ENCODE measurements at regions of chr15 and their contacts with region 1.

Region 1: DNA sequence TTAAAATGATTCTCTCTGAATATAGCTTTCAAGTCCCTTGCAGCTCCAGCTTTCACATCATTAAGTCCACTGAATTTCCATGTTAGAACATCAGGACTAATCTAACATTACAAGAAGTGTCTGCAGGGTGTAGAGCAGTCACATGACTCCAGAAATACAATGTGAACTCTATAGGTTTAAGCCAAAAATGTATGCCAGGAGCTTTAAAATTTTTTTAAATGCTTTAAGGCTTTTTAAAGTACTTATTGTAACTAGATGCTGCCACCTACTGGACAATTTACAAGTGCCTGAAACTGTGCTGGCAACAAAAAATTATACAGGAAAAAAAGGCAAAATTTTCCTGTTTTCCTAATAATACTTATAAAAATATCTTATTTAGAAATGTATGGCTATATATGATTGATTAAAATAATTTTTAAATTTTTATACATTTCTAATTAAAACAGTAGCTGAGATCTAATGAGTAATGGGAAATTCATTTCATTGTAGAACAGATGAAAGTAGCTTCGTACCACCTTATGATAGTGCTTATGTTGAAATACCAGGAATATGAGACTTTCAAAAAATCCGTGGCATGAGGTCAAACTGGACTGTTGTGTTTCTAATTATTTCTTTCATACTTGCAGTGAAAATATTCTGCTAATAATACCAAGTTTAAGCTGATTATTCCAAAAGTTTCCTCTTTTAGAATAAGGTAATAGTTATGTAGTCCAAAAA is 25.7 kb downstream of the FSIP1 start:
- DNase-seq: peak; percentile 24
- H3K4me3 Mint-ChIP-seq: no peak overlapping the region
- H3K27ac Mint-ChIP-seq: no peak overlapping the region
- H3K4me1 Mint-ChIP-seq: no peaks in the 10 kb centered on the region
- H3K27me3 Mint-ChIP-seq: peaks cover 7% of the 10 kb centered on the region

Region 2: DNA sequence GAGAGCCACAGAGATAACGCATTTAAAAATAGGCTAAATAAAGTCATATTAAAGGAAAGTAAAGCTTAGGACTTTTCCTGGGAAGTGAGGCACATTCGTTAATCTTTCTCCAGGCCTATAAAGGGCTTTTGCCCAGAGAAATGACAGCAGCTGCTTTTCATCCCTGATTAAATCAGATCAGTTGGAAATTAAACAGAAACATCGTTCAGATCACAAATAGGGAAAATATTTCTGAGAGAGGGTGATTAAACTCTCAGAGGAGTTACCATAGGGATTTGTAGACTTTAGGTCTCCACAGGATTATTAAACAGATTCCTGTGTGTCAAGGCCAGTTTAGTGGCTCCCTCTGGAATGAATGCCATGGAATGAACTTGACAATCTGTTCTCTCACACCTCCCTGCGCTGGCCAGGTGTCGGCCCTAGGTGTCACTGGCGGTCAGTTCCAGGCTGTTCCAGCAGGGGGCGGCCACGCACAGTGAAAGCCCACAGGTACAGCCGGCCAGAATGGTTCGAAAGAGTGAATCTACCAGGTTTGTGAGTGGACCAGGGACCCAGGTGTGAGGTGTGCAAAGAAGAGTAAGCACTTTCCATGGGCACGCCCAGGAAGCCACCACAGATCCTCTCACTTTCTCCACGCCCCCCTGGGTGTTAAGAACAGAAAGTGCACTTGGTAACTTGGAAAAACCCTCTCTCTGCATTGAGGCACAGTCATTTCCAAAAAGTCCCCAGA is 939.4 kb before region 1 on chr15:
- CTCF ChIA-PET with region 1: interaction called, 3 read pairs
- intact Hi-C with region 1: loop called (anchors 2 kb)
- DNase-seq: peak; percentile 90
- H3K4me3 Mint-ChIP-seq: no peak overlapping the region
- H3K27ac Mint-ChIP-seq: no peak overlapping the region
- H3K4me1 Mint-ChIP-seq: peaks cover 8% of the 10 kb centered on the region
- H3K27me3 Mint-ChIP-seq: peaks cover 2% of the 10 kb centered on the region

Region 3: DNA sequence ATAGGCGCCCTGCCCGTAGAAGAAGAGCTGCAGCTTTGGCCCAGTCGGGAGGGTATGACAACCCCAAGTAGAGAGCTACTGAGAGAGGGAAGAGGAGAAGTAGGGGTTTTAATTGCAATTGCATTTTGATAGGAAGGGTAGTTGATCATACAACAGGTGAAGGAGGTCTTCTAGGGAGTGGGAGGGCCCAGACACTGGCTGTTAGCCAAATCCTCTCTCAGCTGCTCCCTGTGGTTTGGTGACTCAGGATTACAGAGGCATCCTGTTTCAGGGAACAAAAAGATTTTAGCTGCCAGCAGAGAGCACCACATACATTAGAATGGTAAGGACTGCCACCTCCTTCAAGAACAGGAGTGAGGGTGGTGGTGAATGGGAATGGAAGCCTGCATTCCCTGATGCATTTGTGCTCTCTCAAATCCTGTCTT is 585.0 kb before region 1 on chr15:
- CTCF ChIA-PET with region 1: no interaction called
- intact Hi-C with region 1: loop called (anchors 10 kb)
- DNase-seq: peak; percentile 68
- H3K4me3 Mint-ChIP-seq: no peak overlapping the region
- H3K27ac Mint-ChIP-seq: no peak overlapping the region
- H3K4me1 Mint-ChIP-seq: no peaks in the 10 kb centered on the region
- H3K27me3 Mint-ChIP-seq: peaks cover 13% of the 10 kb centered on the region

Region 4: GRCh38 chr15:39453500-39454073 is 303.4 kb before region 1 on chr15:
- CTCF ChIA-PET with region 1: no interaction called
- intact Hi-C with region 1: no loop called
- DNase-seq: peak; percentile 30
- H3K4me3 Mint-ChIP-seq: no peak overlapping the region
- H3K27ac Mint-ChIP-seq: no peak overlapping the region
- H3K4me1 Mint-ChIP-seq: peaks cover 2% of the 10 kb centered on the region
- H3K27me3 Mint-ChIP-seq: peaks cover 3% of the 10 kb centered on the region

Region 5: DNA sequence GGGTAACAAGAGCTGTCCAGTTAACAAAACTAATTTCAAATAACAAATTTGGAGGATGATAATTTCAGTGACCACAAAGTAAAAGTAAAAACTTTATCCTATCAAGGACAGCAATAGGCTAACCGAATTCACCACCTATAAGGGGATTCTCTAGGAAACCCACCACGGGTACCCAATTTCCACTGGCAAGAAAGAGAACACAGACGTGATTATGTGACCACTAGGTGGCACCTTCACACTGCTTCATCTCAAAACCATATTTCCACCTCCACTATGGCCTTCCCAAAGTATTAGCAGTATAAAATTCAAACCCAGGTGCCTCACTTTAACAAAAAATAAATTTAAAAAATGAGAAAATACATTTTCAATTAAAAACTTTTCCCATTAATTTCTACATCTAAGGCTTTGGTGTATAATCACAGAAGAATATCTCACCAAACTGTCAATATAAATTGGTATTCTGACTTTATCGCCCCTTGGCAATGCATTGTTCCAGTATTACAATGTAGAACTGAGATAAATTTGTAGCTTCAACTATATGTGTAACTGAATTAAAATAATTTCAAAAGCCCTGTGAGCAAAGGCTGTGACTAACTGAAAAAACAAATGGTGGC is 70.9 kb before region 1 on chr15:
- CTCF ChIA-PET with region 1: interaction called, 95 read pairs
- intact Hi-C with region 1: loop called (anchors 1 kb)
- DNase-seq: peak; percentile 54
- H3K4me3 Mint-ChIP-seq: no peak overlapping the region
- H3K27ac Mint-ChIP-seq: no peak overlapping the region
- H3K4me1 Mint-ChIP-seq: no peaks in the 10 kb centered on the region
- H3K27me3 Mint-ChIP-seq: no peaks in the 10 kb centered on the region

Region 6: DNA sequence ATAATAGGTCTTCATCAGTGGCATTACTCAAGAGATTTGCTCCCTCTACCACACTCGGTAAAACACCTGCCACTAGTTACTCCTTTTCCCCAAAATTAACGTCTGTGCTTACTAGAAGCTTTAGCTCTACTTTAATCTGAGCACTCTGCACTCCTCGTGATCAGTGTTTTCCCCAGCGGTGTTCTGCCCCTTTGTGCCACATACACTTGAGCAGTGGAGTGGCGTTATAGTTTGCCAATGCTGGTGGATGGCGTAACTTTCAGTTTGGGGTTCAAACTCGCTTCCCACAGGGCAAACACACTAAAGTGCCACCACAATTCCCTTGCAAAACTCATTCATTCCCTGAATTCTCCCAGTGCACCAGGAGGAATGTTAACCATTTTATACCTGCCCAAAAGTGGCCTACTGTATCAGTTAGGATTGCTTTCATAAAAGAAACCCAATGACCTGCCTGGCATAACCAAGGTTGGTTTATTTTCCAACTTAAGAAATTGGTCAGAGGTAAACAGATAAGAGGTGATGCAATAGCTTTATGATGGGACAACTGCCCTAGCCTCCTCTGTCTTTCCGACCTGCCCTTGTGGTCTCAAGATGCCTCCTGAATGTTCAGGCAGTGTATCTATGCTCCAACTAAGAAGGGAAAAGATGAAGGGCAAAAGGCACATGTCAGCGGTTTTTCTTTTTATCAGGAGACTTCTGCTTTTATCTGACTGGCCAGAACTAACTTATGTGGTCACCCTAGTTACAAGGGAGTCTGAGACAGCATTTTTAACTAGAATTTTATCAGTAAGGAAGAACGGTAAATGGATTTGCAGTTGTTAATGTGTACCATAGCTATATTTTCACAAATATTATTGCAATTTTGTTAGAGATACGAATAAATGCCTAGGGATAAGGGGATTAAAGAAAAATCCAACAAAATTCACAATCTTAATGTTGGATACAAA is 58.2 kb before region 1 on chr15:
- CTCF ChIA-PET with region 1: interaction called, 14 read pairs
- intact Hi-C with region 1: no loop called
- DNase-seq: no peak
- H3K4me3 Mint-ChIP-seq: no peak overlapping the region
- H3K27ac Mint-ChIP-seq: no peak overlapping the region
- H3K4me1 Mint-ChIP-seq: no peaks in the 10 kb centered on the region
- H3K27me3 Mint-ChIP-seq: no peaks in the 10 kb centered on the region

Region 7: DNA sequence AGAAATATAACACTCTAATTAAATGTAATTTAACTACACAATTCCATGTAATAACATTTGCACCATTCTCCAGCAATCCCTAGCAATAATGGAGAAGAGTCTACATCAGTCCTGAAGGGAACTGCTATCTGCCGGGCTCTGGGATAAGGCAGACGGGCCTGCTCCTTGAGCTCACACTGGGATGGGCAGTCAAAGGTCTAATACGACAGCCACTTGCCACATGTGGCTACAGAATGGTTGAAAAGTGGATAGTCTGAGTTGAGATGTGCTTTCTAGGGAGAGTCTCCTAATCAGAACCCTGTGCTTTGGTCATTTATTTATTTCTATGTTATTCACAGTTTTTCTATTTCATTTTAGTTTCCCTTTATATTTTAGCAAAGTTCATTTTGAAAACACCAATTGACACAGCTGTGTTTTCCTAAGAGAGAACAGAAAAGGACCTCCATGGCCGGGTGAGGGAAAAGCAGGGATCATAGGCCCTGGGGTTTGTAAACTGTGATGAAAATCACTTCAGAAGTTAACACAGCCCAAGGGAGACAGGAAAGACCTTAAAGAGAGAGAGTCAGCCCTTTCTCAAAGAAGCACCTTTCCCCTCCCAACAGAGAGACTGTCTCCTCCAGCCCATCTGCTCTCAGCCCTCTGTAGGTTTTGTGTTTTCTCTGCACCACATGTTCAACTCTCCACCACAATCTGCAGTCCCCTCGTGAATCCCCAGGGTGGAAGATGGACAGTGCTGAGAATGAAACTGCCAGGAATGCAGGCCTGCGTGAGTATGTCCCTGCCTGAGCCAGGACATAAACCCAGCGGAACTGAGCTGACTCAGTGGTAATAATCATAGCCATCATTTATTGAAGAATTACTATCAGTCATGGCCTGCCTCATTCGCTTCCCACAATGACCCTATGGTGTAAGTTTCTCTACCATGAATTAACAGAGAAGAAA is 14.1 kb after region 1 on chr15:
- CTCF ChIA-PET with region 1: interaction called, 12 read pairs
- intact Hi-C with region 1: no loop called
- DNase-seq: no peak
- H3K4me3 Mint-ChIP-seq: no peak overlapping the region
- H3K27ac Mint-ChIP-seq: no peak overlapping the region
- H3K4me1 Mint-ChIP-seq: peaks cover 15% of the 10 kb centered on the region
- H3K27me3 Mint-ChIP-seq: no peaks in the 10 kb centered on the region

Measured in activated naive CD4-positive, alpha-beta T cell treated with anti-CD3 and anti-CD28 coated beads for 36 hours (primary cell).